ENCODE measurements at regions of chr5 and their contacts with region 1.

Region 1: DNA sequence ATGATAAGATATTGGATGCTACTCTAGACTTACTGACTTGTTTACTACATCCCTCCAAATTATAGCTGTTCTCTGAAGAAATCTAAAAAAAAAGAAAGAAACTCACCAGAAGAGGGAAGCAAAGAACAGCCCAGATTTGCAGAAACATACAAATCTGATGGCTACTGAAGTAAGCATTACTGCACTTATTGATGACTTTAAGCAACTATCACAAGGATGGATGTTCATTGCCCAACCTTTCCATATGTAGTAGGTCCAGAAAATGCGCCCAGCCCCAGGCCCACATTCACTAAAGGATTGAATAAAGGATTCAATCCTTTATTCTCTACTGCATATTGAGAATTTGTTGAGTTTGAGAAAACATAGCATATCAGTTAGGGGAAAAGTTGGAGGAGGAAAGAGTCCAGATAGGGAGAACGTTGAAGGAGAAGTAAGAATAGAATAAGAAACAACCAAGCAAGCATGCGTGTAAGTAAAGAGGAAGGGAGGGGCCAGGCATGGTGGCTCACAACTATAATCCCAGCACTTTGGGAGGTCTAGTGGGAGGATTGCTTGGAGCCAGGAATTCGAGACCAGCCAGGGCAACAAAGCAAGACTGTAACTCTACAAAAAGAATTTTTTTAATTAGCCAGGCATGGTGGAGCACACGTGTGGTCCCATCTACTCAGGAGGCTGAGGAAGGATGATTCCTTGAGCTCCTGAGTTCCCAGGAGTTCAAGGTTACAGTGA is 33.8 kb upstream of the DTWD2 start:
- DNase-seq: no peak
- H3K4me3 Mint-ChIP-seq: no peak overlapping the region
- H3K27ac Mint-ChIP-seq: no peak overlapping the region
- H3K4me1 Mint-ChIP-seq: peaks cover 9% of the 10 kb centered on the region
- H3K27me3 Mint-ChIP-seq: no peaks in the 10 kb centered on the region
- CTCF ChIP-seq: peak; percentile 34

Region 2: DNA sequence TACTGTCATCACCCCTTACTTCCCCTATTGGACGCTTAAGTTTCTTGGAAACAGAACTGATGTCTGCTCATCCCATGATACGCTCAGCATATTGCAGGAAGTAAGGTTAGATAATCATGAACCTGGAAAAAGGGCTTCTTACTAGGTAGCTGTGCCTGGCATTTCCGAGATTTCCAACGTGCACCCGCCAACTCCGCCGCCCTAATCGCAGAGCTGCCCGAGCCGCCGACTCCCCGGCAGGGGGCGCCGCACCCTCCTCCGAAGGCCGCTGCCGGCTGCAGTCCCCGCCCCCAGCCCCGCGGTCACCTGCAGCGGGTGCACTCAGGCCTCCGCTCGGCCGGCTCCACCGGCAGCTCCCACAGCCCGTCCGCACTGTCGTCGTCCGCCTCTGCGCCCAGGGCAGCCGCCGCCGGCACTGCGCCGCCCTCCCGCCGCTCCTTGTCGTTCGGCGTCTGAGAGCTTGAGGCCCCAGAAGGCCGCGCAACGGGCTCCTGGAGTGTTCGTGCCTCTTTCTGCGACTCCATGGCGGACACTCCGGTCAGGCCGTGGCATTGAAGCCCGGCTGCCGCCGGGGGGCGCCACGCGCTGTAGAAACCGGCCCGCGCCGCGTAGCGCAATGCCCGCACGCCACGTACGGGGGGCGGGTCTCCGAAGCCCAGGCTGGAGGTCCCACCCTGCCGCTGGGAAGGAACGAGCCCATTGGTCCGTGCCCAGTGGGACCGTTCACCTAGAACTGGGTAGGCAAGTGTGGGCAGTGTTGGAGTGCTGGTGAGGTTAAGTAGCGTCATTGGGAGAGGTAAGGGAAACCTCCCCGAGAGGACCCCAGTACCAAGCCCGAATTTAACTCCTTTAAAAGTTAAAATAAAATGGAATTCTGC is 34.0 kb before region 1 on chr5 and contains the start of gene DTWD2:
- CTCF ChIA-PET with region 1: interaction called, 12 read pairs
- intact Hi-C with region 1: no loop called
- DNase-seq: peak; percentile 99
- H3K4me3 Mint-ChIP-seq: peak within 1 kb of the TSS; percentile 82
- H3K27ac Mint-ChIP-seq: peak within 1 kb of the TSS; percentile 91
- H3K4me1 Mint-ChIP-seq: peaks cover 54% of the 10 kb centered on the region
- H3K27me3 Mint-ChIP-seq: no peaks in the 10 kb centered on the region
- CTCF ChIP-seq: peak; percentile 98
- total RNA-seq, gene DTWD2: 12.3 and 12.6 TPM in 2 replicates

Region 3: GRCh38 chr5:119131530-119132313 is 109.5 kb after region 1 on chr5:
- CTCF ChIA-PET with region 1: no interaction called
- intact Hi-C with region 1: loop called (anchors 5 kb)
- DNase-seq: no peak
- H3K4me3 Mint-ChIP-seq: no peak overlapping the region
- H3K27ac Mint-ChIP-seq: peak overlapping the region; percentile 79
- H3K4me1 Mint-ChIP-seq: peaks cover 32% of the 10 kb centered on the region
- H3K27me3 Mint-ChIP-seq: no peaks in the 10 kb centered on the region
- CTCF ChIP-seq: no peak

Measured in Calu3 (cell line).